ENCODE measurements at regions of chr5 and their contacts with region 1.

Region 1: DNA sequence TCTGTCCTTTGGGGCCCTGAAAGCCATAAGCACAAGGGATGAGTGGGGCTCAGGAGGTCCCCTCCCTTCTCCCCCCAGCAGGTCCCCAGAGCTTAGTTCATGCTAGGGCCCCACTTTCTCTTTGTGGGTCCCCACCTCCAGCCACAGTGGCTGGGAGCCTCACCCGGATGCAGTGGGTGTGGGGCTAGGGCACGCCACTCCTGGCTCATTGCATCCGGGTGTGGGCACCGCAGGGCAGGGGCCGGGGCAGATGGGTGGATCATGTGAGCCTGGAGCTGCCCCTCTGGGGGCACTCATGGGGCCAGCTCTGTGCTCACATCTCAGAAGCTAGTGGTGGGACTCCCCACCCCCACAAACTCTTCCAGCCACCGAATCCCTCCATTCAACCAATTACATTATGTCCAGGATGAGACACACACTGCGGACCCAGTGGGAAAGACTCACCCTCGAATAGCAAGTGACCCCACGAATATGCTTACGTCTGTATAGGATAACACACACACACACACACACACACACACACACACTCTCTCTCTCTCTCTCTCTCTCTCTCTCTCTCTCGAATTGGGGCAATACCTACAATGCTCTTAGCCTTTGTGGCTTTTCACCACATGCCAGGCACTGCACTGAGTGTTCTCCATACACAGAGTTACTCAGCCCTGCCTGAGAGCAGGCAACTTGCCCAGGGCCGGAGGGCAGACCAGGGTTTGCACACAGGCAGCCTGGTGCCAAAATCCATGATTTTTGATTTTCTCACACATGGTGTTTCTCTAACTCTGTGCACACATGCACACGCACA is 16.8 kb upstream of the PHYKPL start:
- DNase-seq: peak in 22 of 35 experiments; percentile 13 to 63 (median 40)
- ATAC-seq: peak; percentile 73 to 88 (median 83)
- H3K4me3 ChIP-seq: peak overlapping the region in 1 of 2 donors; percentile 4
- H3K4me3 Mint-ChIP-seq: peak overlapping the region in 2 of 3 donors; percentile 1 to 73
- H3K27ac ChIP-seq: peak overlapping the region; percentile 32
- H3K27ac Mint-ChIP-seq: peak overlapping the region; percentile 68 to 72
- H3K4me1 ChIP-seq: peaks cover 0 to 36% of the 10 kb centered on the region in 2 experiments
- H3K4me1 Mint-ChIP-seq: peaks cover 16 to 25% (median 17%) of the 10 kb centered on the region in 3 donors
- H3K27me3 ChIP-seq: peaks cover 0 to 4% of the 10 kb centered on the region in 2 experiments
- H3K27me3 Mint-ChIP-seq: no peaks in the 10 kb centered on the region

Region 2: GRCh38 chr5:176887252-176887849 is 1362.0 kb before region 1 on chr5:
- CTCF ChIA-PET with region 1: no interaction called
- POLR2A ChIA-PET with region 1: no interaction called
- DNase-seq: no peak
- ATAC-seq: no peak
- H3K4me3 ChIP-seq: no peak overlapping the region
- H3K4me3 Mint-ChIP-seq: no peak overlapping the region
- H3K27ac ChIP-seq: no peak overlapping the region
- H3K27ac Mint-ChIP-seq: no peak overlapping the region
- H3K4me1 ChIP-seq: peaks cover 0 to 2% of the 10 kb centered on the region in 2 experiments
- H3K4me1 Mint-ChIP-seq: peaks cover 0 to 6% (median 4%) of the 10 kb centered on the region in 3 donors
- H3K27me3 ChIP-seq: peaks cover 0 to 27% of the 10 kb centered on the region in 2 experiments
- H3K27me3 Mint-ChIP-seq: peaks cover 2 to 9% of the 10 kb centered on the region in 2 donors

Region 3: GRCh38 chr5:178113199-178113787 is 136.1 kb before region 1 on chr5 and contains the start of gene N4BP3:
- CTCF ChIA-PET with region 1: no interaction called
- POLR2A ChIA-PET with region 1: no interaction called
- DNase-seq: peak; percentile 48 to 86 (median 64)
- ATAC-seq: peak; percentile 64 to 82 (median 79)
- H3K4me3 ChIP-seq: peak within 1 kb of the TSS; percentile 57 to 75
- H3K4me3 Mint-ChIP-seq: peak within 1 kb of the TSS; percentile 85 to 97 (median 86)
- H3K27ac ChIP-seq: peak within 1 kb of the TSS; percentile 47
- H3K27ac Mint-ChIP-seq: peak within 1 kb of the TSS; percentile 57 to 72
- H3K4me1 ChIP-seq: peaks cover 35 to 55% of the 10 kb centered on the region in 2 experiments
- H3K4me1 Mint-ChIP-seq: peaks cover 37 to 47% (median 38%) of the 10 kb centered on the region in 3 donors
- H3K27me3 ChIP-seq: peaks cover 0 to 41% of the 10 kb centered on the region in 2 experiments
- H3K27me3 Mint-ChIP-seq: no peaks in the 10 kb centered on the region
- total RNA-seq, gene N4BP3: 4.0 to 8.1 (median 6.9) TPM

Region 4: DNA sequence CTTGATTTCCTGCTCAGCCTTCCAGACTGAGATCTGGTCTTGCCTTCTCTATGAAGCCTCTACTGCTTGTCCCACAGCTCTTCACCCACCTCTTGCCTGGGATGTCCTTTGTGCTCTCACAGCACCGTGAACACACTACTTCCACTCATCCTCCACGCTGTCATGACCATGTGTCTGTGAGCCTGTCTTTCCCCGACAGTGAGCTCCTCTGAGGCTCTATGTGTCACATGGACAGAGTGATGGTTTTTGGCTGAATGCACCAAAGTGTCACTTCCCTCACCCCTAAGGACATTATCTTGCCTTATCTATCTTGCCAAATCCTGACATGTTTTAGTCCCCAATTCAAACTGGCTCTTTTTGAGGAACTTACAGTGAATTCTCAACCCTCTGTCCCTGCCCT is 28.1 kb before region 1 on chr5:
- CTCF ChIA-PET with region 1: no interaction called
- POLR2A ChIA-PET with region 1: no interaction called
- DNase-seq: no peak
- ATAC-seq: no peak
- H3K4me3 ChIP-seq: no peak overlapping the region
- H3K4me3 Mint-ChIP-seq: no peak overlapping the region
- H3K27ac ChIP-seq: no peak overlapping the region
- H3K27ac Mint-ChIP-seq: peak overlapping the region; percentile 66 to 79
- H3K4me1 ChIP-seq: peaks cover 2 to 3% of the 10 kb centered on the region in 2 experiments
- H3K4me1 Mint-ChIP-seq: peaks cover 30 to 62% (median 32%) of the 10 kb centered on the region in 3 donors
- H3K27me3 ChIP-seq: no peaks in the 10 kb centered on the region
- H3K27me3 Mint-ChIP-seq: no peaks in the 10 kb centered on the region

Region 5: DNA sequence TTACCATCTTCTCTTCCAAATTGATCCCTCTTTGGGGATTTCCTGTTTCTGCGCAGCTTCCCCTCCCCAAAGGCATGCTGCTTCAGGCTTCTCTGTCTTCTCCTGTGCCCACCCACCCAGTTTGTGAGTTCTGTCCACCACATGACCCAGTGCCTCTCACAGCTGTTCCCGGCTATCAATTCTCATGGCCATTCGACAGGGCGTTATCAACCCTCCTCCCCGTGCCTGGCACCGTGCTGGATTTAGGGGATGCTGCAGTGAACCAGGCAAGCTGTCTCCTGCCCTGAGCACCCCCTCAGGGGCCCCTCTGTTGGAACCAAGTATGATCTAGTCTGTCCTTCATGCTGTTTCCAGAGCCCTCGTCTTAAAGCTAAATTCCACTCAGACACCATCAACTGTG is 302.1 kb after region 1 on chr5:
- CTCF ChIA-PET with region 1: no interaction called
- POLR2A ChIA-PET with region 1: interaction called in 1 of 2 experiments, 16 read pairs
- DNase-seq: no peak
- ATAC-seq: no peak
- H3K4me3 ChIP-seq: no peak overlapping the region
- H3K4me3 Mint-ChIP-seq: no peak overlapping the region
- H3K27ac ChIP-seq: no peak overlapping the region
- H3K27ac Mint-ChIP-seq: no peak overlapping the region
- H3K4me1 ChIP-seq: no peaks in the 10 kb centered on the region
- H3K4me1 Mint-ChIP-seq: no peaks in the 10 kb centered on the region
- H3K27me3 ChIP-seq: peaks cover 0 to 23% of the 10 kb centered on the region in 2 experiments
- H3K27me3 Mint-ChIP-seq: peaks cover 8 to 23% of the 10 kb centered on the region in 2 donors

Region 6: GRCh38 chr5:178625679-178626483 is 376.5 kb after region 1 on chr5:
- CTCF ChIA-PET with region 1: no interaction called
- POLR2A ChIA-PET with region 1: interaction called in 1 of 2 experiments, 10 read pairs
- DNase-seq: peak in 2 of 35 experiments; percentile 3 to 4
- ATAC-seq: peak; percentile 4 to 18 (median 6)
- H3K4me3 ChIP-seq: peak overlapping the region; percentile 84
- H3K4me3 Mint-ChIP-seq: peak overlapping the region; percentile 91 to 99 (median 98)
- H3K27ac ChIP-seq: peak overlapping the region; percentile 97
- H3K27ac Mint-ChIP-seq: peak overlapping the region; percentile 98 to 100
- H3K4me1 ChIP-seq: peaks cover 20 to 32% of the 10 kb centered on the region in 2 experiments
- H3K4me1 Mint-ChIP-seq: peaks cover 44 to 47% (median 44%) of the 10 kb centered on the region in 3 donors
- H3K27me3 ChIP-seq: no peaks in the 10 kb centered on the region
- H3K27me3 Mint-ChIP-seq: no peaks in the 10 kb centered on the region

Region 7: GRCh38 chr5:179907570-179908324 is 1658.4 kb after region 1 on chr5 and contains the start of gene TBC1D9B:
- CTCF ChIA-PET with region 1: no interaction called
- POLR2A ChIA-PET with region 1: no interaction called
- DNase-seq: peak; percentile 45 to 90 (median 63)
- ATAC-seq: peak; percentile 90 to 95 (median 92)
- H3K4me3 ChIP-seq: peak within 1 kb of the TSS; percentile 55 to 58
- H3K4me3 Mint-ChIP-seq: peak within 1 kb of the TSS; percentile 81 to 87 (median 82)
- H3K27ac ChIP-seq: peak within 1 kb of the TSS; percentile 41
- H3K27ac Mint-ChIP-seq: peak within 1 kb of the TSS; percentile 52 to 89
- H3K4me1 ChIP-seq: peaks cover 0 to 23% of the 10 kb centered on the region in 2 experiments
- H3K4me1 Mint-ChIP-seq: peaks cover 21 to 30% (median 23%) of the 10 kb centered on the region in 3 donors
- H3K27me3 ChIP-seq: peaks cover 0 to 2% of the 10 kb centered on the region in 2 experiments
- H3K27me3 Mint-ChIP-seq: peaks cover 0 to 1% of the 10 kb centered on the region in 2 donors
- total RNA-seq, gene TBC1D9B: 65.9 to 125 (median 96.2) TPM